ENCODE measurements at regions of chr6 and their contacts with region 1.

Region 1: DNA sequence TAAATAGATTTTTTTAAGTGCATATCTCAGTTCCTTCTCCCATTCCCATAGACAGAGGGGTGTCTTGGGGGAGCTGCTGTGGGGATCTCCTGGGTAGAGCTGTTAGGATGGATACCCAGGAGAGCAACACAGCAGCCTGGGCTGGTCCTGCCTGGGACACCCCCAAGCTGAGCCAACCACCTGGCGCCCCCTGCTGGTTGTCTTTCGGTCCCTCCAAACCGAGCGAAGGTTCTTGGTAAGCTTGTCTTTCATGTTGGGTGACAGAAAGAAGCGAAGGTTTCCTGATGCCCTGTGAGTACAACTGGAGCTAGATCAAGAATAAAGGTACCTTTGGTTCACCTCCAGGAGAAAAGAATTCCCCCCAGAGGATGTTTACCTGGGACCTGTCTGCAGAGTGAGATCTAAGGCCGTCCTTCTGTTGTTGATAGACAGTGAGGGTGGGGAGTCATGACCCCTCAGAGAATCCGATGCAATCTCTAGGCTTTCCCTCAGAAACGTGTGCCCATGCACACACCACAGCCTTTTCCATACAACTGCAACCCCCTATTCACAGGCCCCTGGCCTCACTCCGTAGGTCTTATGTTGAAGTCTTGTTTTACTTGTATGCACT is 50.8 kb downstream of the SNX9 start:
- DNase-seq: peak; percentile 90
- H3K4me3 Mint-ChIP-seq: no peak overlapping the region
- H3K27ac Mint-ChIP-seq: peak overlapping the region; percentile 28
- H3K4me1 Mint-ChIP-seq: peaks cover 28% of the 10 kb centered on the region
- H3K27me3 Mint-ChIP-seq: no peaks in the 10 kb centered on the region

Region 2: GRCh38 chr6:157667211-157668008 is 206.4 kb before region 1 on chr6:
- CTCF ChIA-PET with region 1: interaction called, 27 read pairs
- DNase-seq: peak; percentile 69
- H3K4me3 Mint-ChIP-seq: no peak overlapping the region
- H3K27ac Mint-ChIP-seq: no peak overlapping the region
- H3K4me1 Mint-ChIP-seq: peaks cover 18% of the 10 kb centered on the region
- H3K27me3 Mint-ChIP-seq: peaks cover 32% of the 10 kb centered on the region

Region 3: DNA sequence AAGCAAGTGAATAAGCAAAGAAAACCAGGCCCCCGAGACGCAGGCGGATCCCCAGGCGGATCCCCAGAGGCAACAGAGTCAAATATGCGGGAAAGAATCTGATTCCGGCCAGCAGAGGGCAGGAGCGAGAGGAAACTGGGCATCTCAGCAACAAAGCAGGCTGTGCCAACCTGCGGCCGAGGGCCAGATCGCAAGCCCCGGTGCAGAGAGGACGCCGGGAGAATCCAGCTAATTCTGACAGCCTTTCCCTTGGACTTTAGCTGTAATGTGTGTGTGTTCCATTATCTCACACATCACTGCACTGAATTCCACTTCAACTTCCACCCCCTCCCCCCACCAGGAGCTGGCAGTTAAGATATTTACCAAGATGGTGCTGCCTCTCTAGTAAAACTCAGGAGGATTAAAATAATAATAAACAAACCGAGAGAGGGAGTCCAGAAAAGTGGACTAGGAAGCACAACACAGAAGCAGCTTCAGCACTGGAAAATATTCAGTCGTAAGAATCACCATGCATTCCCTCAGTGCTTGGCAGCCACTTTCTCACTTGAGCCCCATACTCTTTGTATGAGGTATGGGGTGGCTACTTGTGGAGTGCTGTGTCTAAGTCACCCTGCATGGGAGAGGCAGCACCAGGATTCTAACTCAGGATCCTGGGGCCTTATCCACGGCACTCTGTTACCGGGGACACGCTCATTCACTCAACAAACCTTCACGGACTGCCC is 117.0 kb before region 1 on chr6:
- CTCF ChIA-PET with region 1: interaction called, 113 read pairs
- DNase-seq: peak; percentile 88
- H3K4me3 Mint-ChIP-seq: no peak overlapping the region
- H3K27ac Mint-ChIP-seq: no peak overlapping the region
- H3K4me1 Mint-ChIP-seq: peaks cover 74% of the 10 kb centered on the region
- H3K27me3 Mint-ChIP-seq: peaks cover 82% of the 10 kb centered on the region

Region 4: DNA sequence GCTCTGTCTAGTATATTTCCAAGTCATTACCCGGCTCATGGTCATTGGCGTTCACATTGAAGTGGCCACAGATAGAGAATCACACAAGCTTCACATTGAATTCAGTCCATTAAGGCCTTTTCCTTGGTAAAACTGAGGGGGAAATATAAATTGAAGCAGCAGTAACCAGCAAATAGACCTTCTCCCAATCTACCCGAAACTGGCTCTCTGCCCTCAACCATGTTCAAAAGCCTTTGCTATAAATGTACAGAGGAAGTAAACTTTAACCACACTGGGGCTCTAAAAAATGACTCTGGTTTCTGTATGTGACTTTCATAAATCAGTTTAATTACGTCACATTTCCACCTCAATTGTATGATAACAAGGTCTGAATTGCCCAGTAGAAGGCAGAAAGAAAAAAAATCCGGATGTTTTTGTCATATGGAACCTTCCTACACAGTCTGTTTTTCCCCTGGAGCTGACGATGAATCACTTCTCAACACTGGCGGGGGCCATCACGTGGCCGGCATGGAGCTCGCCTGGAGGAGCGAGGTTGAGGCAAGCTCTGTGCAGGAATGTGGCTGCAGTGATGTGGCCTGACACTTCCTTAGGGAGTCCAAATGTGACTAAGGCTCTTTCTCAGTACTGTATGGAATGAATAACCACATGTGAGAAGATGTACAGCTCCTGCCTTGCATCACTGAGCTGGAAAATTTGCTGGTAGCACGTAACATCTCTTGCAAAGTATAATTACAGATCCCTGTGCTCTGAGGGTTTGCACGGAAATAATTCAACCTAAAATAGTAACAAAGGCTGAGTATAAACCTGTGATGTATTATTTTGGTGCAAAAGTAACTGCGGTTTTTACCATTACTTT is 109.4 kb before region 1 on chr6:
- CTCF ChIA-PET with region 1: interaction called, 113 read pairs
- DNase-seq: peak; percentile 91
- H3K4me3 Mint-ChIP-seq: peak overlapping the region; percentile 45
- H3K27ac Mint-ChIP-seq: peak overlapping the region; percentile 96
- H3K4me1 Mint-ChIP-seq: peaks cover 84% of the 10 kb centered on the region
- H3K27me3 Mint-ChIP-seq: peaks cover 46% of the 10 kb centered on the region

Region 5: GRCh38 chr6:157885211-157885788 is 11.5 kb after region 1 on chr6:
- CTCF ChIA-PET with region 1: interaction called, 20 read pairs
- DNase-seq: peak; percentile 77
- H3K4me3 Mint-ChIP-seq: no peak overlapping the region
- H3K27ac Mint-ChIP-seq: peak overlapping the region; percentile 86
- H3K4me1 Mint-ChIP-seq: peaks cover 48% of the 10 kb centered on the region
- H3K27me3 Mint-ChIP-seq: no peaks in the 10 kb centered on the region

Region 6: DNA sequence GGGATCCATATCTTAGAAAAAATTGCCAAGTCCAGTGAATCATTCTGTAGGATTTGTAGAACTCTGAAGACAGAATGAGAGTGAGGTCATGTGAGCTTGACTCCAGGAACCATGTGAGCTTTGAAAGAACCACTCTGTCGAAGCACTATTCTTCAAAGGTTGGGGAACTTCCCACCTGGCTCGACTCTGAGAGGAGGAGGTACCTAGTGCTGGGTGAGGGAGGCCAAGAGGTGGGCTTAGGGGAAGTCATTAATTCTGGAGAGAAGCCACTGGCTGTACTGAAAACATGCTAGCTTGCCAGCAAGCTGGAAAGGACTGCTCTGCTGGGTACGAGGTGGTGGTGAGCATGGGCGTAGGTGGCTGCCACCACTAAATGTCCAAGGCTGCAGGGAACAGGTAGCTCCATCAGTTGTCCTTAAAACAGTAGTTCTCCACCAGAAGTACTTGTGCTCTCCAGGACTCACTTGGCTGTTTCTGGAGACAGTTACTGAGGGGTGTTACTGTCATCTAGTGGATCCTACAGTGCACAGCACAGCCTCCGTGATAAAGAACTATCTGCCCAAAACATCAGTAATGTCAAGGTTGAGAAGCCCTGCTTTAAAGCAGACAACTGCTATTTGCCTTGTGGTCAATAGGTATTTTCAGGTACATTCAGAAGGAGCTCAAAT is 73.2 kb after region 1 on chr6:
- CTCF ChIA-PET with region 1: interaction called, 11 read pairs
- DNase-seq: peak; percentile 42
- H3K4me3 Mint-ChIP-seq: no peak overlapping the region
- H3K27ac Mint-ChIP-seq: no peak overlapping the region
- H3K4me1 Mint-ChIP-seq: no peaks in the 10 kb centered on the region
- H3K27me3 Mint-ChIP-seq: peaks cover 19% of the 10 kb centered on the region

Region 7: GRCh38 chr6:158072083-158072721 is 198.4 kb after region 1 on chr6:
- CTCF ChIA-PET with region 1: interaction called, 12 read pairs
- DNase-seq: peak; percentile 79
- H3K4me3 Mint-ChIP-seq: no peak overlapping the region
- H3K27ac Mint-ChIP-seq: no peak overlapping the region
- H3K4me1 Mint-ChIP-seq: peaks cover 28% of the 10 kb centered on the region
- H3K27me3 Mint-ChIP-seq: no peaks in the 10 kb centered on the region

Region 8: DNA sequence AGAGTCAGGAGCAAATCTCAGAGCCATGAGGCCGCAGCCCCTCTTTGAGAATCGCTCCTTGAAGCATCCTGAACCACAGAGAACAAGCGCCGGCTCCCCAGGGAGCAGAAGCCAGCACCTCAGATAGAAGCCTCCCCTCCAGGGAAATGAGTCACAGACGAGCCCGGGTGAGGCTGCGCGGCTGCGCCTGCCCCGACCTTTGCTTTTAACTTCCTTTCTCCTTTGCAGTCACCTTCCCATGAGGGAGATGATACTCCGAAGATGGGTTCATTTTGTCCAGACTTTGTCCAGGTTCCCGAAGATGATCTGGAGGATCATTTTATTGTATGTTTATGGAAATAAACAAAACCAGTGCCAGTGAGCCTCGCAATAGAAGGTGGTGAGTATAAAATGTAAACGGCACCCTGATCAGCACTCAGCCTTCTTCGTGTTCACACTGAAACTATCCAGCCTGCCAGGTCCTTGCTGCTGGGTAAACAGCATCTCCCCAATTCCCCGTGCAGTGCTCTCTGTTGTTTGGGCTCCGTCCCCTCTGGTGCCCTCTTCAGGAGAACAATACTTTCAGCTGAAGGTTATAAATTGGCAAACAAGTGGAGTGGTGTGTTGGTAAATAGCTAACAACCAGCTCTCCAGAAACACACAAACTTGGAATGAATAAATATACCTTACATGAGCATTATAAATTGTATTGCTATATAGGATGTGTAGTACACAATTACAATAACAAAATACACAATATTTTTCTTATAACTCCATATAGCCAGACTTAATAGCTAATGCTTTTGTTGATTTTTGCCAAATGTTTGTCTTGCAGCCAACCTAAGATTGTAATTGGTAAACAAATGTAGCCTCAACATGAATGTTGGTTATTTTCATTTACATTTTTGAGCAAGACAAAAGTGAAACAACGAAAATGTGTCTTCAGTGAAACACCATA is 644.6 kb after region 1 on chr6:
- CTCF ChIA-PET with region 1: no interaction called
- DNase-seq: peak; percentile 82
- H3K4me3 Mint-ChIP-seq: peak overlapping the region; percentile 77
- H3K27ac Mint-ChIP-seq: peak overlapping the region; percentile 80
- H3K4me1 Mint-ChIP-seq: peaks cover 53% of the 10 kb centered on the region
- H3K27me3 Mint-ChIP-seq: peaks cover 66% of the 10 kb centered on the region

Measured in activated naive CD4-positive, alpha-beta T cell treated with anti-CD3 and anti-CD28 coated beads, Interleukin-2, amount 10 ng/mL, durations not matched to agents 7 days and 5 days (primary cell).